Right ventricle myocardium inferior (tissue), 1 donor: ENCODE measurements at regions of chr15 and their contacts with region 1.

Region 1: DNA sequence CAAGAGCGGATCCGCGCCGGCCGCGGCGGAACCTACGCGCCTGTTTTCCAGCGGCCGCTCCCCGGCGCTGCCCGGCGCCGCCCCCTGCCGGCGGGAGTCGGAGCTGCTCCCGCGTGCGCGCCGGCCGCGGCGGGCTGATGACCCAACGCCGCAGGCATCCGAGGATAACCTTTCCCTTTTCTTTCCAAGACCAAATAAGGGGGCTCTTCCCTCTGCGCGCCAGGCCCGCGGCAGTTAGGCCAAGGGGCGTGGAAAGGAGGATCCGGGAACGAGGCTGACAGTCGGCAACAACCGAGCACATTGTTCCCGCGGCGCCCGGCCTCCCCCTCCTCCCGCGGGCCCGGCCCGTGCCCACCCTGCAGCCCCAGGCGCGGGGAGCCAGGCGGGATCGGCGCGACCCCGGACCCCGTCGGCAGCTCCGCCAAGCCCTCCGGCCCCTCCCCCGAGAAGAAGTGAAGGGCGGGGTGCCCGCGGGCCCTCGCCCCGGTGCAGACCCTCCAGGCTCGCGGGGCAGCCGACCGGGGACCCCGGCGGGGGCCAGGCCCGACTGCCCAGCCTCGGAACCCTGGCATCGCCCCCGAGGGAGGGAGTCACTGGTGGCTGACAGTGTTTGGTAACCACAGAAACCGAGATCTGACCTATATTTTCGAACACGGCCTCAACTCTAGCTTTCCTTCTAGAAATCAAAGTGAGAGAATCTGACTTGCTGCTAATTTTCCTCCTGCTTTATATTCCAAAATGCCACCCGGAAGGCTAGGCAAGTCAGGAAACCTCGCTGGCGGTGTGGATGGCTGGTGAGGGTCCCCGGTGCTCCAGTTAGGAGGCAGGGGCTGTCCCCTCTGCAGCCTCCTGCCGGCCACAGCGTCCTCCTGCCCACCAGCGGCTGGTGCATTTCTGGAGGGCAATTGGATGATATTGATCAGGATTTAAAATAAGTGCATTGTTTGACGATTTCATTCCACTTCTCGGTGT is 45.6 kb upstream of the SYNM start:
- DNase-seq: peak; percentile 87
- ATAC-seq: peak; percentile 92

Region 2: DNA sequence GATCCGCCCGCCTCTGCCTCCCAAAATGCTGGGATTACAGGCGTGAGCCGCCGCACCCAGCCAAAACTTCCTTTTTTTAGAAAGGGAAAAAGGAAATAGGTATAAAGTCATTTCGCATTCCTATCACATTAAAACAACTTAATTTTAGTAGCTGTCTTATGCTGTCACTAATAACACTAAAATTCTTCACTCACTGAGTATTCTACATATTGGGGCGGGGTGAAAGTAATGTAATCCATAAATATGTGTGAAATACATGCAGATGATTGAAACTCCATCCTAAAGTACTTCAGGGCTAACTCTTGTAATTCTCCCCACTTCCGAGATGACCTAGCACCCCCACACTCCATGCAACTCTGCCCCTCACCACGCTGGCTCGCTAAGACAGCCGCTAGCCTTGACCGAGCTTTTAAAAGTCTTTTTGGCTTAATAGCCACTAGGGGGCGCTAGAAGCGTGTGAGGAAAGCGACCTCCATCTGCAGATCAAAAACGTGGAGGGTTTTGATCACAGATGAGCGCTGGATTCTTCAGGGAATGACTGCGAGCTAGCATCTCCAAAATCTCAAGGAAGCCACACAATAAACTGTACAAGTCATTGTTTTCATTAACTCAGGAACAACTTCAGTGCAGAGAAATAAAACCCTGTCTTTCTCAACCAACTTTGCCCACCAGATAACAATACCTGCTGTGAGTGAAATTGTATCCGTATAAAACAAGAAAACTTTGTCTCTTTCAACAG is 540.3 kb before region 1 on chr15:
- intact Hi-C with region 1: loop called (anchors 5 kb)
- DNase-seq: no peak
- ATAC-seq: peak; percentile 64

Region 3: DNA sequence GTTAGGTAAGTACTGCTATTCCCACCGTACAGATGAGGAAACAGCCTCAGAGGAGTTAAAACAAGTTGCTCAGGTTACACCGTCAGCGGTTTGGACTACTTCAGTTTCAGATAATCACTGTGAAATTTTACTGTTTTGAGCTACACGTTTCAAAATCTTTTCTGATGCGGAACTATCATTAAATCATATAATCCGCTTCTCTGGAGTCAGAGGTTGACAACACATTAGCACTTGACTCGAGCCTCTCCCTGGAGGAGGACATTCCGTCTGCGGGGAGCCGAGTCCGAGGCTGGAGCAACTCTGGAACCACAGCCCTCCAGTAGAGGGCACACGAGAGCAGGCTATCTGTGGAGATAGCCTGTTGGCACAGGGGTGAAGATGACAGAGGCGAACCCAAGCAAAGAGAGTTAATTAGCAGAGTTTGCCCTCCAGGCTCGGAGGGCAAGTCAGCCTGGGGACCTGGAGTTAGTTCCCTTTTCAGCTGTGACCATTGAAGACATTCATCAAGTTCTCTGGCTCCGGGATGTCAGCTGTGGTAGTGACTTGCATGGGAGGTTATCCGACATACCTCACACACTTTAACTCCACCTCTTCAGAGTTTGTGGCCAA is 279.7 kb before region 1 on chr15:
- intact Hi-C with region 1: loop called (anchors 2 kb)
- DNase-seq: peak; percentile 83
- ATAC-seq: peak; percentile 90

Region 4: DNA sequence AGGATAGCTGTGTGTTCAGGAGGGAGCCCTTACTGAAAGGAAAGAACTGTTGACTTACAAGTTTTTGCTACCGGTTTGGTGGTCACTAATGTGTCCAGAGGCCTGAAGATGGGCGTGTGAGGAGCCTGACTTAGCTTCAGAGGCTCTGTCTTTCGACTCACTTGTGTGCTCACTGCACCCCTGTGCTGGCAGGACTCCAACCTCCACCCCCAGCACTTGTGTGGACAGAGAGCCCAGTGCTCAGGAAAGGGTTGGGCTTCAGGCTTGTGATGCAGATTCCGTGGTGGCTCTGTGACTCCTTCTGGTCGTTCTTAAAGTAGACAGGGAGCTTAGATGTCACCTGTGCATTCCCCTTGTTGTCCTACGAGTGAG is 152.6 kb before region 1 on chr15:
- intact Hi-C with region 1: loop called (anchors 5 kb)
- DNase-seq: no peak
- ATAC-seq: peak; percentile 35

Region 5: DNA sequence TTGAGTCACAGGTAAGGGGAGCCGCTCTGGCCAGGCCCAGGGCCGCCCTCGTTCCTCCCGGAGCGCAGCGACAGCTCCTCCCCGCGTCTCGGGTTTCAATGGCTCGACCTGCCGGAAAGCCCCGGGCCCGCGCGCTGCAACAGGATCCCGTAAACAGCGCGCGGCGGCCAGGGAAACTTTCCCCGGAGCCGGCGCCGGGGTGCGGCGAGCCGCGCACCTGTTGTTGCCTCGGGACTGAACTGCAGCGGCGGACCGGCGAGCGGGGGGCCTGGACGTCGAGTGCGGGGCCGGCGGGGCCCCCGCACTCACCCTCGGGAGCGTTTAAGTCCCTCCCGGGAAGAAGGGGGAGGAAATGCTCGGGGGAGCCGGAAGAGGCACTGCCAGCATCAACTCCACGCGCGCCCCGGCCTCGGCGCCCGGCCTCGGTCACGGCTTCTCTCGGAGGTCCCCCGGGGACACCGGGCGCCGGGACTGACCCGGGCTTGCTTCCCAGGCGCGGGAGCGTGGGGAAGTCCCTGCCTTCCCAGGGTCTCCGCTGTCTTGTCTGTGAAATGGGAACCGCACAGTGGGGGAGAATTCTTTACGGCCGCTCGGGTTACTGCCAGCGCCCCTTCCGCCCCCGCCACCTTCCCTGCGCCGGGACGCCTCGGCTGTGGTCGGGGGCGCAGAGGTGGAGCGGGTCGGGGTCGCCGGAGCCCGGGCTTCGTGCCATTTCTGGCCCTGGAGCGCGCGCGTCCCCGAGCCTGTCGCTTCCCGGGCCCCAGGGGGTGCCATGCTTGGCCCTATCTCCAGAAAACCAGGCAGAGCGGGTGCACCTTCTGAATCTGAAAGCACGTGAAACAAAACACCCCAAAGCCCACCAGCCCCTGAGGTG is 44.3 kb before region 1 on chr15:
- intact Hi-C with region 1: loop called (anchors 5 kb)
- DNase-seq: peak; percentile 78
- ATAC-seq: peak; percentile 81

Region 6: DNA sequence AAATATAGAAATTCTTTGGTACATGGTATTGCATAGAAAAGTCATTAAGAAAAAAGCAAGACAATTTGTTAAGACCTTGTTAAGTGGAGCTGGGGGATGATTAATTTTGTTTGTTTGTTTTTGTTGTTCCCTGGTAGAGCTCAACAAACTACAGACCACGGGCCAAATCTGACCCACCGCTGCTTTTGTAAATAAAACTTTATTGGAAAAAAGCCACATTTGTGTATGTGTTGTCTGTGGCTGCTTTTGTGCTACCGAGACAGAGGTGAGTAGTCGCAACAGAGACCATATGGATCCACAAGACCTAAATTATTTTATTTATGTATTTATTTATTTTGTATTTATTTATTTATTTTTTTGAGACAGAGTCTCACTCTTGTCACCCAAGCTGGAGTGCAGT is 28.5 kb before region 1 on chr15:
- intact Hi-C with region 1: no loop called
- DNase-seq: no peak
- ATAC-seq: no peak